ENCODE measurements at regions of chr19 and their contacts with region 1.

Region 1: GRCh38 chr19:58499021-58499927 is 12.5 kb downstream of the SLC27A5 start:
- DNase-seq: peak; percentile 98
- ATAC-seq: peak; percentile 98
- H3K4me3 ChIP-seq: peak overlapping the region; percentile 53
- H3K27ac ChIP-seq: peak overlapping the region; percentile 73
- H3K4me1 ChIP-seq: peaks cover 4% of the 10 kb centered on the region; the same call in 1 of the 2 replicates
- H3K27me3 ChIP-seq: no peaks in the 10 kb centered on the region
- CTCF ChIP-seq: peak; percentile 34
- POLR2A ChIP-seq: peak; percentile 48; the same call in 1 of the 2 replicates
- RAD21 ChIP-seq: peak; percentile 21; the same call in 1 of the 2 replicates

Region 2: GRCh38 chr19:58386576-58387337 is 112.5 kb before region 1 on chr19 and contains the start of gene RPS5:
- CTCF ChIA-PET with region 1: no interaction called
- POLR2A ChIA-PET with region 1: no interaction called
- dilution Hi-C with region 1: no loop called
- in situ Hi-C with region 1: no loop called
- intact Hi-C with region 1: loop called (anchors 1 kb)
- DNase-seq: peak; percentile 99
- ATAC-seq: peak; percentile 91
- H3K4me3 ChIP-seq: peak within 1 kb of the TSS; percentile 61
- H3K27ac ChIP-seq: peak within 1 kb of the TSS; percentile 86
- H3K4me1 ChIP-seq: peaks cover 12% of the 10 kb centered on the region
- H3K27me3 ChIP-seq: no peaks in the 10 kb centered on the region
- CTCF ChIP-seq: no peak
- POLR2A ChIP-seq: peak; percentile 99
- RAD21 ChIP-seq: no peak
- total RNA-seq, gene RPS5: 3,811 and 5,858 TPM in 2 replicates

Region 3: DNA sequence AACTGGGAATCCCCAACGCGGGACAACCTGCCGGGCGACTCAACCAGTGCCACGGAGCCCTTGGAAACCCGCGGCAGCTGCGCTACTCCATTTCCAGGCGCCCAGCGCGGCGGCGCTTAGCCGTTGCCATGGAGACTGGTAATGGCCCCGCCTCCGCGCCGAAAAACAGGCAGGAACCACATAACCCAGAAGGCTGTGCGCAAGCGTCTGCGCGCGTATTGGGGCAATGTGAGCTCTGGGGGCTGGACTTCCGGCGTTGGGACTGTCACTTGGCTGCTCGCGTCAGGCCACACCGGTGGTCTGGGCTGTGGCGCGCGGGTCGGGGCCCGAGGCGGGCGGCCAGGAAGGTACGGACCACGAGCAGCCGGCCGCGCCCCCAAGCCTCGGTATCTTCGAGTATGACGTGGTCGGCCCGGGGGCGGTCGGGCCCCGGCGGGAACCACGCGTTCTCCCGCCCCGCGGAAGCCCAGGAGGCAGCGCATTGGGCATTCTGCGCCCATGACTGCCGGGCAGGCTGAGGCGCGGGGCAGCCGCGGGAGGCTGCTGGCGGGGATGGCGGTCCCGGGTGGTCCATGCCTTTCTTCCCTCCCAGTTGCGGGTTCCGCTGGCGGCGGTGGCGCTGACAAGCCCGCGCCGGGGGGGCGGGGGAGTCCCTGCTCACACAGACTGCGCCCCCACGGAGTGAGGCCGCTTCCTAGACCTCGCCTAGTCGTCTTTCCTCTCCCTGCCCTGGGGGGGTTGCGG is 47.7 kb before region 1 on chr19 and contains the start of gene ZNF324B:
- CTCF ChIA-PET with region 1: no interaction called
- POLR2A ChIA-PET with region 1: no interaction called
- dilution Hi-C with region 1: no loop called
- in situ Hi-C with region 1: no loop called
- intact Hi-C with region 1: no loop called
- DNase-seq: peak; percentile 92
- ATAC-seq: peak; percentile 99
- H3K4me3 ChIP-seq: peak within 1 kb of the TSS; percentile 67
- H3K27ac ChIP-seq: peak within 1 kb of the TSS; percentile 3; the same call in 1 of the 2 replicates
- H3K4me1 ChIP-seq: no peaks in the 10 kb centered on the region
- H3K27me3 ChIP-seq: no peaks in the 10 kb centered on the region
- CTCF ChIP-seq: no peak
- POLR2A ChIP-seq: no peak; the same call in 1 of the 2 replicates
- RAD21 ChIP-seq: no peak
- total RNA-seq, gene ZNF324B: 3.3 and 4.1 TPM in 2 replicates

Region 4: GRCh38 chr19:58519355-58520256 is 20.3 kb after region 1 on chr19 and contains the start of gene ZBTB45:
- CTCF ChIA-PET with region 1: no interaction called
- POLR2A ChIA-PET with region 1: no interaction called
- dilution Hi-C with region 1: no loop called
- in situ Hi-C with region 1: no loop called
- intact Hi-C with region 1: loop called (anchors 1 kb)
- DNase-seq: peak; percentile 96
- ATAC-seq: peak; percentile 84
- H3K4me3 ChIP-seq: peak within 1 kb of the TSS; percentile 69
- H3K27ac ChIP-seq: peak within 1 kb of the TSS; percentile 93
- H3K4me1 ChIP-seq: peaks cover 6% of the 10 kb centered on the region
- H3K27me3 ChIP-seq: no peaks in the 10 kb centered on the region
- CTCF ChIP-seq: peak; percentile 73
- POLR2A ChIP-seq: peak; percentile 66; the same call in 1 of the 2 replicates
- RAD21 ChIP-seq: peak; percentile 72
- total RNA-seq, gene ZBTB45: 1.4 TPM in 2 replicates

Measured in IMR-90 (cell line).